Adrenal gland (tissue), 19 donors: ENCODE measurements at regions of chr7 and their contacts with region 1.

Region 1: GRCh38 chr7:50467817-50468610 is 17.9 kb upstream of the FIGNL1 start:
- DNase-seq: peak; percentile 68 to 95 (median 87)
- H3K4me3 ChIP-seq: peak overlapping the region in 1 of 4 donors; percentile 4
- H3K27ac ChIP-seq: peak overlapping the region in 1 of 5 donors; percentile 57
- H3K4me1 ChIP-seq: peaks cover 3 to 9% of the 10 kb centered on the region in 2 donors
- H3K27me3 ChIP-seq: no peaks in the 10 kb centered on the region
- CTCF ChIP-seq: peak; percentile 86 to 94 (median 89)
- POLR2A ChIP-seq: no peak

Region 2: GRCh38 chr7:50632561-50633413 is 164.8 kb after region 1 on chr7:
- intact Hi-C with region 1: loop called in 1 of 2 experiments (anchors 5 kb)
- DNase-seq: peak in 5 of 7 donors; percentile 41 to 77 (median 60)
- H3K4me3 ChIP-seq: no peak overlapping the region
- H3K27ac ChIP-seq: no peak overlapping the region
- H3K4me1 ChIP-seq: no peaks in the 10 kb centered on the region
- H3K27me3 ChIP-seq: no peaks in the 10 kb centered on the region
- CTCF ChIP-seq: peak; percentile 60 to 82 (median 74)
- POLR2A ChIP-seq: no peak

Region 3: GRCh38 chr7:50679218-50680007 is 211.4 kb after region 1 on chr7:
- intact Hi-C with region 1: loop called in 1 of 2 experiments (anchors 5 kb)
- DNase-seq: no peak
- H3K4me3 ChIP-seq: no peak overlapping the region
- H3K27ac ChIP-seq: no peak overlapping the region
- H3K4me1 ChIP-seq: peaks cover 0 to 26% of the 10 kb centered on the region in 2 donors
- H3K27me3 ChIP-seq: no peaks in the 10 kb centered on the region
- CTCF ChIP-seq: peak; percentile 5 to 57 (median 38)
- POLR2A ChIP-seq: no peak

Region 4: GRCh38 chr7:51067757-51068156 is 599.7 kb after region 1 on chr7:
- intact Hi-C with region 1: loop called (anchors 10 kb)
- DNase-seq: peak; percentile 47 to 91 (median 73)
- H3K4me3 ChIP-seq: no peak overlapping the region
- H3K27ac ChIP-seq: no peak overlapping the region
- H3K4me1 ChIP-seq: peaks cover 0 to 5% of the 10 kb centered on the region in 2 donors
- H3K27me3 ChIP-seq: no peaks in the 10 kb centered on the region
- CTCF ChIP-seq: peak; percentile 54 to 74 (median 68)
- POLR2A ChIP-seq: no peak

Region 5: DNA sequence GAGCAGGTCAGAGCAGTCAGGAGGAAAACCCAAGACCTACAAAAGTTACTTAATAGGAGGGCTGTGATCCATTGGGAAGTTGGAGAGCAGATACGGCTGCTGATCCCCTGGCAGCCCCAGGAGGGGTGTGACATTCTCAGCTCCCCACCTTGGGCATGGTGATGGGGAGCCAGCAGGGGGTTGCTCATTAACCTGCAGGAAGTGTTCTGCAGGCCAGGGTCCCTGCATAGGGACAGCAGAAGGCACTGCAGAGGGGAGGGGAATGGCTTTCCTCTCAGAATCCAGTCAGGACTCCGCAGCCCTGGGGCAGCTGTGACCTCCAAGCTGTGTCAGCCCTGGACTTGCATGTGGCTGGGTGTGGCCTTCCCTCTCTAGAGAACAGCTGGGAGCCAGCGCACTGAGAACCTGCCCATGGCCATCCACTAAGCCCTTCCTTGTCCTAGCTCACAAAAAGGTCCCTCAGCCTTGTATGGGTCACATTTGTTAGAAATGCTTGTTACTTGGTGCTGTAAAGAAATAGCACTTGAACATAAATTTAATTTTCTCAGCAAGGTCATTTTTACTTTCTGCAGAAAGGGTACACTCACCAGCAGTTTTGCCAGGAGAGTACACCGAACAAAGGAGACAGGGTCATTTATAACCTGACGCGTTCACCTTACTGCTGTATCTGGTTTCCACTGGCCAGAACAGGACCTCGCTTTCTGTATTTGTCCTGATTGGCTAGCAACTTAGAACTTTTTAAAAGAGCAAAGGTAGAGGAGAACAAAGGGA is 679.0 kb after region 1 on chr7:
- intact Hi-C with region 1: loop called (anchors 5 to 10 kb)
- DNase-seq: no peak
- H3K4me3 ChIP-seq: no peak overlapping the region
- H3K27ac ChIP-seq: no peak overlapping the region
- H3K4me1 ChIP-seq: no peaks in the 10 kb centered on the region
- H3K27me3 ChIP-seq: no peaks in the 10 kb centered on the region
- CTCF ChIP-seq: no peak
- POLR2A ChIP-seq: no peak

Region 6: GRCh38 chr7:51162724-51163329 is 694.8 kb after region 1 on chr7:
- intact Hi-C with region 1: loop called (anchors 2 to 10 kb)
- DNase-seq: peak; percentile 73 to 92 (median 82)
- H3K4me3 ChIP-seq: no peak overlapping the region
- H3K27ac ChIP-seq: no peak overlapping the region
- H3K4me1 ChIP-seq: no peaks in the 10 kb centered on the region
- H3K27me3 ChIP-seq: no peaks in the 10 kb centered on the region
- CTCF ChIP-seq: peak; percentile 70 to 87 (median 74)
- POLR2A ChIP-seq: no peak